K562 (cell line): ENCODE measurements at regions of chr11 and their contacts with region 1.

Region 1: DNA sequence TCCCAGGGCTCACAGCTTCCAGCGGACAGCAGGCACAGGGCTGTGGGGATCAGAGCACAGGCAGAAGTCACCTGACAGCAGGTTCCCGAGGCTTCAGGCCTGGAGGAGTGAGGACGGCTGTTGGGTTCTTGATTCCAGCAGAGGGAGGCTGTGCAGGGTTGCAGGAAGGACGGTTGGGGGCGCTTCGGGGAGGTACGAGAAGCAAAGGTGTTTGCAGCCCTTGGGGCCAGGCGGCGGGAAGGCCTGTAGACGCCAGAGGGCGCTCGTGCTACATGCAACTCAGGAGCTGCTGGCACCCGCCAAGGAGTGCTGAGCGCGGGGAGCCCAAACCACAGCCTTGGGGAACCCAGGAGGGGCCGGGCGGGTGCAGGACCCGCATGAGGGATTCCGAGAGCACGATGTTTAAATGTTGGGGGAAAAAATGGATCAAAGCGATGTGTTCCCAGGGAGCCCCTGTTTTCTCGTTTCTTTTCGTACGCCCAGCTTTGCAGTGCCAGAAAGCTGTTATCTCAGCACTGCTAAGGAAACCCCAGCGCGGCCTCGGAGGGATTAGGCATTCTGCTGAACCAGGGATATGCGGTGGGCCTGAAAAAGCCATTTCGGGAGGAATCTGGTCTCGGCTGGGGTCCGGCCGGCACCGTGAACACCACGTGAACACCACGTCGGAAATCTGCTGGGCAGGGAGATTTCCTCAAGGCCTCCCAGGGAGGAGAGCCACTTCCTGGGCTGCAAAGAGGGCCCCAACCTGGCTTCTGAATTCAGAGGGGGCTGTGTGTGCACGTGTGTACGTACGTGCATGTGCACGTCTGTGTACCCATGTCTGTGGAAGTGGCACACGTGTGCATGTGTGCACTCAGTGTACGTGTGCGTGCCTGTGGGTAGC is 88.1 kb downstream of the KCNQ1 start:
- DNase-seq: peak; percentile 88 to 95 (median 89)
- ATAC-seq: peak; percentile 93
- H3K4me3 ChIP-seq: no peak overlapping the region
- H3K27ac ChIP-seq: peak overlapping the region; percentile 15; the same call in 1 of the 3 replicates
- H3K4me1 ChIP-seq: peaks cover 9 to 62% of the 10 kb centered on the region in 2 experiments
- H3K27me3 ChIP-seq: peaks cover 0 to 39% of the 10 kb centered on the region in 2 experiments; a peak in 4 of 5 replicates
- CTCF ChIP-seq: peak; percentile 98 to 100 (median 99)
- EP300 ChIP-seq: no peak
- POLR2A ChIP-seq: no peak
- RAD21 ChIP-seq: peak; percentile 100

Region 2: GRCh38 chr11:2305140-2305840 is 227.7 kb before region 1 on chr11:
- CTCF ChIA-PET with region 1: interaction called, 9 read pairs
- POLR2A ChIA-PET with region 1: no interaction called
- in situ Hi-C with region 1: no loop called
- intact Hi-C with region 1: loop called (anchors 10 kb)
- DNase-seq: peak; percentile 66 to 88 (median 70)
- ATAC-seq: peak; percentile 81
- H3K4me3 ChIP-seq: peak overlapping the region; percentile 5; the same call in 1 of the 2 replicates
- H3K27ac ChIP-seq: peak overlapping the region; percentile 47; the same call in 2 of the 3 replicates
- H3K4me1 ChIP-seq: peaks cover 59 to 92% of the 10 kb centered on the region in 2 experiments
- H3K27me3 ChIP-seq: no peaks in the 10 kb centered on the region; a peak in 1 of 5 replicates
- CTCF ChIP-seq: peak; percentile 89 to 91 (median 91)
- EP300 ChIP-seq: no peak
- POLR2A ChIP-seq: no peak
- RAD21 ChIP-seq: peak; percentile 56 to 85

Region 3: DNA sequence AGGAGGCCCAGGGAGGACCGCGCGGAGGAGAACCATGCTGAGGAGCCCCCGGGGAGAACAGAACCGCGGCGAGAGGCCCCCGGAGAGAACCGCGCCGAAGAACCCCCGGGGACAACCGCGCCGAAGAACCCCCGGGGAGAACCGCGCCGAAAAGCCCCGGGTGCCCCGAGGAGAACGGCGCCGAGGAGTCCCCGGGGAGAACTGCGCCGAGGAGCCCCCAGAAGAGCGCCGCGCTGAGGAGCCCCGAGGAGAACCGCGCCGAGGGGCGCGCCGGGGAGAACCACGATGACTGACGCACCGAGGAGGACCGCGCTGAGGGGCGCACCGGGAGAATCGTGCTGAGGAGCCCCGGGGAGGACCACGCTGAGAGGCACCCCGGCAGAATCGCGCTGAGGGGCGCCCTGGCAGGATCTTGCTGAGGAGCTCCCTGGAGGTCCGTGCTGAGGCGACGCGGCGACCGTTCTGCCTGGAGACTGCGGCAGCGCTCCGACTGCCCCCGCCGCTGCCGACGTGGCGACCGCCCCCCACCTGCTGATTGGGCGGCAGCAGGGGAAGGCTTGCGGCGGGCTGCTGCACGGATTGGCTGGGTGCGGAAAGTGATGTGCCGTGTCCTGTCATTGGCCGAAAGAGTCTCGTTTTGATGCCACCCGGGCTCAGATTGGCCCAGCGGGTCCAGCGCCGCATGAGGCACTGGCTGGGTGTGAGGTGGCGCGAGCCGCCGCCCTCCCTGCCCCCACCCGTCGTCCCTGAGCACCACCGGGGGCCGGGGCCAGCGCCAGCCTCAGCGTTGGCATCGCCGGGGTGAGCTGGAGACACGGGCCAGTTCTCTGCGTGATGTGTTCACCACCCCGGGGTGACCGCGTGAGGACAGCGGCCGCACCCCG is 166.8 kb after region 1 on chr11 and contains the start of gene KCNQ1OT1:
- CTCF ChIA-PET with region 1: no interaction called
- POLR2A ChIA-PET with region 1: no interaction called
- in situ Hi-C with region 1: no loop called
- intact Hi-C with region 1: loop called (anchors 10 kb)
- DNase-seq: peak; percentile 93 to 99 (median 94)
- ATAC-seq: peak; percentile 94
- H3K4me3 ChIP-seq: peak within 1 kb of the TSS; percentile 69
- H3K27ac ChIP-seq: peak within 1 kb of the TSS; percentile 92
- H3K4me1 ChIP-seq: peaks cover 20 to 47% of the 10 kb centered on the region in 2 experiments; a peak in 4 of 5 replicates
- H3K27me3 ChIP-seq: no peaks in the 10 kb centered on the region
- CTCF ChIP-seq: 0 out of 6 replicates have a peak, but pooled peaks of 1 of the 3 experiments have one; percentile 2
- EP300 ChIP-seq: 0 out of 2 replicates have a peak, but pooled peaks have one; percentile 9
- POLR2A ChIP-seq: peak; percentile 97
- RAD21 ChIP-seq: peak in 1 of 2 experiments; percentile 18; a peak in 1 of 4 replicates
- polyA plus RNA-seq, gene KCNQ1OT1: 0.04 to 0.17 TPM

Region 4: DNA sequence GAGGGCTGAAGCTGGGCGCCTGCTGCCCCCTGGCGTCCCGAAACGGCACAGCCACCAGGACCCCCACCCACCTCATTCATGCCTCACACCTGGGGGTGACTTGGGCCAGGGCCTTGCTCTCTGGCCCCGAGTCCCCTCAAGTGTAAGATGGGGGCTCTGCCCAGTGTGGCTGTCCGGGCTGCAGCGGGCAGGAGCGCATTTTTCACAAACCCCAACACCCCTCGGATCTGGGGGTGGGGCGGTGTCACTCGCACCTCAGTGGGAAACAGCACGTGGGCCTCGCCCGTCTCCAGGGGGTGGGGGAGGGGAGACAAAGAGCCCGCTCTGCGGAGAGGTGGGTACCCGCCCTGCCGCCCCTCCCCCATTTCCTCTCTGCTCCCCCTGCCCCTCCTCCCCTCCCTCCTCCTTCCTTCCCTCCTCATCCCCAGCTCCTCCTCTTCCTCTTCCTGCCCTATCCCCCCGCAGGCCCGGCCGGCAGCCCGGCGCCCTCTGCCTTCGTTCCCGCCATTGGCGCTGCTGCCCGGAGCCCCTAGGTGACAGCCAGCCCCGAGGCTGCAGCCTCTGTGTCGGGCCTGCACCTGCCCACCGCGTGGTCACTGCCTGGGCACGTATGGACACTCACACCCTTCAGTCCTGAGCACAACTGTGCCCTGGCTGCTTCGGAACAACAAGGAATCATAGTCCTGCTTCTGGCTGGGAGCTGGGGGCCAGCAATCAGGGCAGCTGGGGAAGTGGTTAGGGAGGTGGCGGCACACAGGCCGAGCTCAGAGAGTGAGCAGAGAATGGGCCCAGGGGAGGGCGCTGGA is 359.5 kb after region 1 on chr11:
- CTCF ChIA-PET with region 1: interaction called, 228 read pairs
- POLR2A ChIA-PET with region 1: interaction called, 13 read pairs
- in situ Hi-C with region 1: loop called (anchors 5 kb)
- intact Hi-C with region 1: loop called (anchors 1 kb)
- DNase-seq: peak; percentile 76 to 87 (median 80)
- ATAC-seq: peak; percentile 80
- H3K4me3 ChIP-seq: peak overlapping the region; percentile 34
- H3K27ac ChIP-seq: peak overlapping the region; percentile 63
- H3K4me1 ChIP-seq: peaks cover 30 to 65% of the 10 kb centered on the region in 2 experiments
- H3K27me3 ChIP-seq: no peaks in the 10 kb centered on the region
- CTCF ChIP-seq: peak; percentile 88 to 93 (median 93)
- EP300 ChIP-seq: no peak
- POLR2A ChIP-seq: peak; percentile 53
- RAD21 ChIP-seq: peak; percentile 90 to 91

Region 5: GRCh38 chr11:3091791-3092602 is 559.1 kb after region 1 on chr11:
- CTCF ChIA-PET with region 1: interaction called, 22 read pairs
- POLR2A ChIA-PET with region 1: no interaction called
- in situ Hi-C with region 1: no loop called
- intact Hi-C with region 1: no loop called
- DNase-seq: peak; percentile 84 to 95 (median 91)
- ATAC-seq: peak; percentile 96
- H3K4me3 ChIP-seq: no peak overlapping the region
- H3K27ac ChIP-seq: no peak overlapping the region
- H3K4me1 ChIP-seq: peaks cover 0 to 50% of the 10 kb centered on the region in 2 experiments; a peak in 2 of 5 replicates
- H3K27me3 ChIP-seq: no peaks in the 10 kb centered on the region
- CTCF ChIP-seq: peak; percentile 97 to 99 (median 98)
- EP300 ChIP-seq: no peak
- POLR2A ChIP-seq: no peak
- RAD21 ChIP-seq: peak; percentile 97